ENCODE measurements at regions of chr10 and their contacts with region 1.

Region 1: GRCh38 chr10:124653811-124654651 is 90.1 kb downstream of the FAM53B start:
- DNase-seq: no peak
- ATAC-seq: no peak
- H3K4me3 Mint-ChIP-seq: no peak overlapping the region
- H3K27ac Mint-ChIP-seq: peak overlapping the region in 4 of 10 donors; percentile 8 to 99 (median 66)
- H3K4me1 Mint-ChIP-seq: peaks cover 33 to 92% (median 73%) of the 10 kb centered on the region in 4 donors
- H3K27me3 Mint-ChIP-seq: no peaks in the 10 kb centered on the region

Region 2: DNA sequence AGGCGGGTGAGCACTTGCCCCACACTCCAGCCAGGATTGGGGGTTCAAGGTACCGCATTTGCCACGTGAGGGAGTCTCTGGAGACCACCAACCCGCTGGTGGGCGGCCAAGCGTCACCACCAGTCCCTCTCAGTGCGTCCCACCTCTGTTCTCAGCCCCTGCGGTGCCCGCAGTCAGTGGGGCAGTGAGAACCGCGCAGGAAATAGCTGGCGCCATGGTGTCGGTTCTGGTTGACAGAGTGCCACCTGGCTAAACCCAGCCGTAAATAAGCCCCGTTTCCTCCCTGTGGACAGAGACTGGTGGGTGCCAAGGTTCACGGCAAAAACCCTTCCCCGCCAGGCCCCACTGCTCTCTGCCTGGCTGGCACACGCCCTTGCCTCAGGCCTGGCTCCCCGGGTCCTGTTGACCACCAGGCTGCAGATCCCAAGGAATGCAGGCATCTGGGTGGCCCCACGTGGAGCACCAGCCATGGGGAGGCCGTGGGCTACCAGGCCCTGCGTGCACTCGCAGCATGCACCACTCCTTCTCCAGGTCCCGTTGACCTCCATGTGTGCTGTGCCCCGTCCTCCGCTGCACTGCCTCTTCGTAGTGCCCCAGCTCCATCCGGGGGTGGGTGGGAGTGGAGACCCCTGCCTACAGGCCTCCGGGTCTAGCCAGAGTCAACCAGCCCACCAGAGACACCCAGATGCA is 52.5 kb before region 1 on chr10:
- POLR2A ChIA-PET with region 1: no interaction called
- DNase-seq: peak in 2 of 10 donors; percentile 50 to 68
- ATAC-seq: peak in 1 of 2 donors; percentile 80
- H3K4me3 Mint-ChIP-seq: peak overlapping the region in 1 of 10 donors; percentile 32
- H3K27ac Mint-ChIP-seq: peak overlapping the region in 2 of 10 donors; percentile 75 to 76
- H3K4me1 Mint-ChIP-seq: peaks cover 6 to 50% (median 10%) of the 10 kb centered on the region in 4 donors
- H3K27me3 Mint-ChIP-seq: no peaks in the 10 kb centered on the region

Region 3: GRCh38 chr10:124677749-124678556 is 23.9 kb after region 1 on chr10:
- POLR2A ChIA-PET with region 1: interaction called, 12 read pairs
- DNase-seq: no peak
- ATAC-seq: peak in 1 of 2 donors; percentile 11
- H3K4me3 Mint-ChIP-seq: peak overlapping the region; percentile 67 to 84 (median 77)
- H3K27ac Mint-ChIP-seq: peak overlapping the region; percentile 35 to 94 (median 80)
- H3K4me1 Mint-ChIP-seq: peaks cover 48 to 98% (median 84%) of the 10 kb centered on the region in 4 donors
- H3K27me3 Mint-ChIP-seq: no peaks in the 10 kb centered on the region

Region 4: GRCh38 chr10:124708922-124709520 is 55.0 kb after region 1 on chr10:
- POLR2A ChIA-PET with region 1: no interaction called
- DNase-seq: no peak
- ATAC-seq: no peak
- H3K4me3 Mint-ChIP-seq: peak overlapping the region in 1 of 10 donors; percentile 37
- H3K27ac Mint-ChIP-seq: peak overlapping the region in 7 of 10 donors; percentile 22 to 90 (median 52)
- H3K4me1 Mint-ChIP-seq: peaks cover 38 to 92% (median 79%) of the 10 kb centered on the region in 4 donors
- H3K27me3 Mint-ChIP-seq: no peaks in the 10 kb centered on the region

Region 5: GRCh38 chr10:124763267-124763666 is 109.2 kb after region 1 on chr10:
- POLR2A ChIA-PET with region 1: no interaction called
- DNase-seq: no peak
- ATAC-seq: no peak
- H3K4me3 Mint-ChIP-seq: no peak overlapping the region
- H3K27ac Mint-ChIP-seq: no peak overlapping the region
- H3K4me1 Mint-ChIP-seq: peaks cover 0 to 8% (median 0%) of the 10 kb centered on the region in 4 donors
- H3K27me3 Mint-ChIP-seq: no peaks in the 10 kb centered on the region

Region 6: DNA sequence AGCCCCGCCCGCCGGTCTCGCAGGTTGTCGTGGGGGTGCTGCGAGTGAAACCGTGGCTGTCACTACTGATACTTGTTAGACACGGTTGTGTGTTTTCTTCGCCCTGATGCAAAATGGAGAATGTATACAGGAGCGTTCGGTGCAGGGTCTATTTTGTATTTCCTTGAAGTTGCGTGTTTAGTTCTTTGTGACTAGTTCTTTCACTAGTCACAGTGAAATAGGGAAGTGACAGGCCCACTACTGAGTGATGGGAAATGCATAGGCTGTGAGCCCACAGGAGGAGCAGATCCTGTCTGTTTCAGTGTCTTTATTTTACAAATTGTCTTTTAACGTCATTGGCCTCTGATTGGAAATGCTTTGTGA is 148.3 kb after region 1 on chr10:
- POLR2A ChIA-PET with region 1: no interaction called
- DNase-seq: peak in 2 of 10 donors; percentile 2 to 3
- ATAC-seq: no peak
- H3K4me3 Mint-ChIP-seq: peak overlapping the region; percentile 85 to 94 (median 89)
- H3K27ac Mint-ChIP-seq: peak overlapping the region; percentile 79 to 96 (median 90)
- H3K4me1 Mint-ChIP-seq: peaks cover 6 to 26% (median 15%) of the 10 kb centered on the region in 4 donors
- H3K27me3 Mint-ChIP-seq: peaks cover 0 to 5% (median 0%) of the 10 kb centered on the region in 5 donors